ENCODE measurements at regions of chrX and their contacts with region 1.

Region 1: GRCh38 chrX:118226090-118226428 is 109.4 kb upstream of the KLHL13 start:
- DNase-seq: no peak
- ATAC-seq: peak; percentile 72
- H3K4me3 ChIP-seq: no peak overlapping the region
- H3K27ac ChIP-seq: no peak overlapping the region
- H3K4me1 ChIP-seq: peaks cover 0 to 6% of the 10 kb centered on the region in 2 experiments; a peak in 2 of 4 replicates
- H3K27me3 ChIP-seq: no peaks in the 10 kb centered on the region
- CTCF ChIP-seq: peak in 2 of 3 experiments; percentile 26 to 42; a peak in 3 of 6 replicates
- POLR2A ChIP-seq: no peak
- RAD21 ChIP-seq: peak; percentile 57

Region 2: DNA sequence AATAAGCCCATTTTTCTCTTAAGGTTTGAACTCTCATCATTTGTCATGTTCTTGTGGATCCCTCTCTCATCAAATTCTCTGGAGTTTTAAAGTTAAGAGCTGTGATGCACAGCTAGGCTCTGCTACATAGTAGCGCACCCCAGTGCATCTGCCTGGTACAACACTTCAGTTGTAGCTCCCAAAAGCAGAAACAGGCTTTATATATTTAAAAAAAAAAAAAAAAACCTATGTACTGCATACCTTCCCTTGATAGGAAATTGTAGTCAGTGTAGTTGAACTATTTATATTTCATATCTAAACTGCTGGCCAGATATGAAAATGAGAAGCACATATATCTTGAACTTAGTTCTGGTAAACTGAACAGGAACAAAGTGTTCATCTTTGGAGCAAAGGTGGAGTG is 240.8 kb before region 1 on chrX:
- CTCF ChIA-PET with region 1: no interaction called
- POLR2A ChIA-PET with region 1: no interaction called
- RAD21 ChIA-PET with region 1: no interaction called
- intact Hi-C with region 1: no loop called
- DNase-seq: no peak
- ATAC-seq: no peak
- H3K4me3 ChIP-seq: no peak overlapping the region
- H3K27ac ChIP-seq: no peak overlapping the region
- H3K4me1 ChIP-seq: no peaks in the 10 kb centered on the region
- H3K27me3 ChIP-seq: no peaks in the 10 kb centered on the region
- CTCF ChIP-seq: peak in 2 of 3 experiments; percentile 12 to 23; a peak in 2 of 6 replicates
- POLR2A ChIP-seq: no peak
- RAD21 ChIP-seq: peak; percentile 22; the same call in 1 of the 2 replicates

Region 3: GRCh38 chrX:117996918-117997480 is 229.1 kb before region 1 on chrX:
- CTCF ChIA-PET with region 1: interaction called, 13 read pairs
- POLR2A ChIA-PET with region 1: no interaction called
- RAD21 ChIA-PET with region 1: no interaction called
- intact Hi-C with region 1: loop called (anchors 1 kb)
- DNase-seq: no peak
- ATAC-seq: no peak
- H3K4me3 ChIP-seq: no peak overlapping the region
- H3K27ac ChIP-seq: no peak overlapping the region
- H3K4me1 ChIP-seq: no peaks in the 10 kb centered on the region
- H3K27me3 ChIP-seq: no peaks in the 10 kb centered on the region
- CTCF ChIP-seq: 0 out of 6 replicates have a peak, but pooled peaks of 2 of the 3 experiments have one; percentile 15 to 21
- POLR2A ChIP-seq: no peak
- RAD21 ChIP-seq: peak; percentile 40

Region 4: GRCh38 chrX:118550792-118551191 is 324.7 kb after region 1 on chrX:
- CTCF ChIA-PET with region 1: no interaction called
- POLR2A ChIA-PET with region 1: no interaction called
- RAD21 ChIA-PET with region 1: no interaction called
- intact Hi-C with region 1: no loop called
- DNase-seq: no peak
- ATAC-seq: no peak
- H3K4me3 ChIP-seq: no peak overlapping the region
- H3K27ac ChIP-seq: no peak overlapping the region
- H3K4me1 ChIP-seq: peaks cover 6 to 32% of the 10 kb centered on the region in 2 experiments
- H3K27me3 ChIP-seq: no peaks in the 10 kb centered on the region
- CTCF ChIP-seq: no peak
- POLR2A ChIP-seq: no peak
- RAD21 ChIP-seq: no peak